Aorta (tissue), 5 donors: ENCODE measurements at regions of chr22 and their contacts with region 1.

Region 1: GRCh38 chr22:28442264-28442710 is 237.4 kb downstream of the TTC28 start:
- DNase-seq: peak; percentile 85 to 89
- ATAC-seq: peak; percentile 92
- H3K4me3 ChIP-seq: peak overlapping the region; percentile 93 to 97
- H3K27ac ChIP-seq: peak overlapping the region; percentile 88 to 91
- H3K4me1 ChIP-seq: peaks cover 0 to 6% of the 10 kb centered on the region in 2 donors
- H3K27me3 ChIP-seq: no peaks in the 10 kb centered on the region

Region 2: DNA sequence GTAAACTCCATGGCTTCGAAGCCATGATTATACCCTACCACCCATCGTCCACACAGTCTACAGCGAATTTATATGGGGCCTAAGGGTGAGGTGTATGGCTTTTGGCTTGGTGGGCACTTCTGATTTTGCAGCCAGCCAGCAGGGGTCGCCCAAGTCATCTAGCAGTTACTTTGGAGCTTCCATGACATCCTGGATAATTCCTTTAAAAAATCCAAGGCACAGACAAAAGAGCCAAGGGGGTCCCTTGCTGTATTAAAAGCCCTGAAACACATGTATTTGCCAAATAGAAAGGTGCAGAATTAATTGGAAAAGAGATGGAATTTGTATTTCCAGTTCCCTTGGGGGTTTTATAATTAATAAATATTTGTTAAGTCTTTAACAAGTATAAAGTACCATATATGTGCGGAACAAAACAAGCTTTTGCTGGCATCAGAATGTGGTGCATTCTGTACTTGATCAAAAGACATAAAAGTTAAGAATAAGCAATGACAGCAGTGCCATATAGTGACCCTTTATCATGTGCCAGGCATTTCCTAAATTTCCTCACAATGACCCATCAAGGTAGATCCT is 390.4 kb before region 1 on chr22:
- intact Hi-C with region 1: loop called in 1 of 2 experiments (anchors 10 kb)
- DNase-seq: peak; percentile 71 to 92
- ATAC-seq: no peak
- H3K4me3 ChIP-seq: no peak overlapping the region
- H3K27ac ChIP-seq: no peak overlapping the region
- H3K4me1 ChIP-seq: no peaks in the 10 kb centered on the region
- H3K27me3 ChIP-seq: no peaks in the 10 kb centered on the region

Region 3: GRCh38 chr22:28112548-28113043 is 329.7 kb before region 1 on chr22:
- intact Hi-C with region 1: loop called in 1 of 2 experiments (anchors 10 kb)
- DNase-seq: no peak
- ATAC-seq: no peak
- H3K4me3 ChIP-seq: no peak overlapping the region
- H3K27ac ChIP-seq: peak overlapping the region in 1 of 2 donors; percentile 38
- H3K4me1 ChIP-seq: peaks cover 0 to 3% of the 10 kb centered on the region in 2 donors
- H3K27me3 ChIP-seq: no peaks in the 10 kb centered on the region

Region 4: GRCh38 chr22:28373831-28374230 is 68.5 kb before region 1 on chr22:
- intact Hi-C with region 1: loop called (anchors 5 to 10 kb)
- DNase-seq: no peak
- ATAC-seq: no peak
- H3K4me3 ChIP-seq: no peak overlapping the region
- H3K27ac ChIP-seq: no peak overlapping the region
- H3K4me1 ChIP-seq: peaks cover 0 to 3% of the 10 kb centered on the region in 2 donors
- H3K27me3 ChIP-seq: no peaks in the 10 kb centered on the region